ENCODE measurements at regions of chr3 and their contacts with region 1.

Region 1: GRCh38 chr3:190321789-190322603 is at the start of gene CLDN1:
- DNase-seq: peak; percentile 78 to 90 (median 86)
- H3K4me3 ChIP-seq: peak within 1 kb of the TSS; percentile 52
- H3K27ac ChIP-seq: peak within 1 kb of the TSS in 1 of 2 donors; percentile 49
- H3K4me1 ChIP-seq: peaks cover 5% of the 10 kb centered on the region
- H3K27me3 ChIP-seq: no peaks in the 10 kb centered on the region
- CTCF ChIP-seq: peak; percentile 87 to 99 (median 91)
- EP300 ChIP-seq: no peak
- POLR2A ChIP-seq: peak; percentile 43
- total RNA-seq, gene CLDN1: 1.8 to 258 (median 13.2) TPM

Region 2: GRCh38 chr3:189737071-189737470 is 584.9 kb before region 1 on chr3:
- intact Hi-C with region 1: no loop called
- DNase-seq: no peak
- H3K4me3 ChIP-seq: no peak overlapping the region
- H3K27ac ChIP-seq: no peak overlapping the region
- H3K4me1 ChIP-seq: no peaks in the 10 kb centered on the region
- H3K27me3 ChIP-seq: no peaks in the 10 kb centered on the region
- CTCF ChIP-seq: no peak
- EP300 ChIP-seq: no peak
- POLR2A ChIP-seq: no peak

Region 3: DNA sequence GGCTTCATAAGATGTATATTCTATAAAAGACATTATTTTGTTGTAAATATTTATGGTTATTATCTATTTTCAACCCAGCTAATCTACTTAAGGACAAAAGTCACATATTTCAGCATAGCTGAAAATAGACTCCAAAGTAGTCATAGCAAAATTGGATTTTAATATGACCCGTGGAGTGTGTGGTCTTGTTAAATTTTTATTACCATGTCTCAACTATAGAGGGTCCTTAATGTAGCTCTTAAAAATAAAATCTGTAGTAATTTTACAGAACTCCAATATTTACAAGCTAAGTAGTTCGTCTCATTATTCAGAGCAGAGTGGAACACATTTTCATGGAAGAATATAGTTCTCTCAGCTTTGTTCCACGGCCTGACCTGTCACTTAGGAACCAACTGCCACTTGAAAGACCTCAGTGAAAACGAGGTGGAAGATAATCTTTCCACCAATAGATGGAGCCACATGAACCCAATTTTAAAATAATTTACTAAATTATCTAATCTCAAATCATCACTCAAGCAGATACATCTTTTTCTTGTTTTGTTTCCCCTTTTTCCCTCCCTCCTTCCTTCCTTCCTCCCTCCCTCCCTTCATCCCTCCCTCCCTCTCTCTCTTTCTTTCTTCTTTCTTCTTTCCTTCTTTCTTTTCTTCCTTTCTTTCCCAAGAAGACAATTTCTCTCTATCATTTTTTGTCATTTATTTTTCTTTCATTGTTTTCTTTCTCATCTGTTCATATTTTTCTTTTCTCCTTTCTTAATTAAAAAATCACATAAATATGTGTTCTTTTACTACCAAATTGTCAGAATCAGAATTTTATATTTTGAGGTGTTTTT is 96.9 kb before region 1 on chr3:
- intact Hi-C with region 1: loop called in 1 of 4 experiments (anchors 5 kb)
- DNase-seq: no peak
- H3K4me3 ChIP-seq: no peak overlapping the region
- H3K27ac ChIP-seq: no peak overlapping the region
- H3K4me1 ChIP-seq: no peaks in the 10 kb centered on the region
- H3K27me3 ChIP-seq: no peaks in the 10 kb centered on the region
- CTCF ChIP-seq: peak in 2 of 3 donors; percentile 29 to 39
- EP300 ChIP-seq: no peak
- POLR2A ChIP-seq: no peak

Measured in ovary (tissue), 10 donors.